ENCODE measurements at regions of chr2 and their contacts with region 1.

Region 1: DNA sequence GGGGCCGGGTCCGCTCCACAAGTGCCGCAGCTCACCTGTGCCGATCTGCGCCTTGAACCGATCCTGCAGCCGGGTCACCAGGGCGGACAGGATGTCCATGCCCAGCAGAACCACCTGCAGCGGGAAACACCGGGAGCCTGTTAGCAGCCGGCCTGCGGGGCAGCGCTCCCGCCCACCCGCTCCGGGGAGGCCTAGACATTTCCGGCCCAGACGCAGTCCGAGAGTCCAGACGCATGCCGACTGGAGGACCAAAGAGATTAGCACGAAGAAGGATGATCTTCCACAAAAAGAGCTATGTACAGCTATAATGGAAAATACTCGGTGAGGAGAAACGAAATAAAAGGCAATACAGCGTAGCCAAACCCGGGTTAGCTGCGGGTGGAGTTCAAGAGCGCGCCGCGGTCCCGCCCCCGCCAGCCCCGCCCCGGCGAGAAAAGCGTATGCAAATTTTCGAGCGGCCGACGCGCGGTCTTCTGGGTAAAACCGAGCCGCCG is 421 bp upstream of the RNU4ATAC start:
- DNase-seq: no peak
- H3K4me3 ChIP-seq: peak overlapping the region; percentile 78
- CTCF ChIP-seq: no peak

Region 2: DNA sequence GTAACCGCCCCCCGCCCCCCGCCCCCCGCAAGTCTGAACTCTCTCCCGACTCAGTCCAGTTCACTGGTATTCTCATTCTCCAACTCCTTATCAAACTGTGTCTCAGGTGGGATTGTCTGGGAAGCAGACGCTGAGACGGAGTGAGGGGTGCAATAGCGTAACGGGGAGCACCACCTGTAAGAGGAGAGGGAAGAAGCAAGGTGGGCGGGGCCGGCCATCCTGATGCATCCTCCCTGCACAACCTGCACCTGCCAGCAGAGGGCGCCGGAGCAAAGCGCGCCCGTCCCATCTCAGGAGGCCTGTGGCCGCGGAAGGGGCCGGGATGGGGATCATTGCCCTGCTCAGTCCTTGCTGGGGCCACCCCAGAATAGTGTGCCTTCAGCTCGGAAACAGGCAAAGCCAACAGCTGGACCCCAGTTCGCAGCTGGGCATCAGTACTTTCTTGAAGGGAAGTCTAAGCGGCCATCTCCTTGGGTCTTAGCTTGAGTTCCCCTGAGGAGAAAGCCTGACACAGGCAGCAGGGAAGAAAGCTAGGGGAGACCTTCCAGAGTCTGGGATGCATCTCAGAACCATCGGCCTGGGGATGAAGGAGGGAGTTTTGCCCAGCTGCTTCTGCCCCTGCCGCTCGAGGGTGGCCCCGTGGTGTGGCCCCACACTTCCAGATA is 453.2 kb before region 1 on chr2:
- CTCF ChIA-PET with region 1: no interaction called
- POLR2A ChIA-PET with region 1: interaction called, 12 read pairs
- DNase-seq: no peak
- H3K4me3 ChIP-seq: no peak overlapping the region
- CTCF ChIP-seq: peak; percentile 98

Region 3: GRCh38 chr2:121471532-121472469 is 58.5 kb before region 1 on chr2:
- CTCF ChIA-PET with region 1: interaction called, 3 read pairs
- POLR2A ChIA-PET with region 1: interaction called, 12 read pairs
- DNase-seq: peak; percentile 47
- H3K4me3 ChIP-seq: no peak overlapping the region
- CTCF ChIP-seq: no peak

Region 4: DNA sequence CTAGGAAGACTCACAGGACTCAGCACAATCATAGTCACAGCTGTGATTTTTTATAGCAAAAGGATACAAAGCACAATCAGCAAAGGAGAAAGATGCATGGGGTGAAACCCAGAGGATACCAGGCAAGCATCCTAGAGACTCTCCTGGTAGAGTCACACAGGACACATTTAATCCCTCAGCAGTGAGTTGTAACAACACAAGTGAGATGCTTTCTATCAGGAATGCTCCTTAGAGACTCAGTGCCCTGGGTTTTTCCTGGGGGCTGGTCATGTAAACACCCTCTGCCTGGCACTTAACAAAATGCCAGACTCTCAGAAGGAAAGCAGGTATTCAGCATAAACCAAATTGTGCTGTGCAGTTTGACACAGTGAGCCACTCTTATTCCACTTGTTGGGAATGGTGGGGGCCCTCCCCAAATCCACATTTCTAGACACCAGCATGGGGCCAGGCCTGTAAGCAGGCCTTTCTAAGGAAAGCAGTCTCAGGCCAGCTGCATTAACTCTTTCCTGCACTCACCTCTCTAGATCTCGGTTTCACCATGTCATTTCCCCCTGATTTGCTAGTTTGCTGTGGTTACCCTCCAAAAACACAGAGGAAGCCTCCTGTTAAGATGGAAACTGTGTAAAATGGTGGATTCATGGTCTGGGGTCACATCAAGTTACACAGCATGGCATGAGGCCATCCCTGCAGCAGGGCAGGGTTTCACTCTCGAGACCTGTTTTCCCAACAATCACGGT is 16.5 kb before region 1 on chr2:
- CTCF ChIA-PET with region 1: interaction called, 12 read pairs
- POLR2A ChIA-PET with region 1: interaction called, 3 read pairs
- DNase-seq: no peak
- H3K4me3 ChIP-seq: no peak overlapping the region
- CTCF ChIP-seq: no peak

Region 5: DNA sequence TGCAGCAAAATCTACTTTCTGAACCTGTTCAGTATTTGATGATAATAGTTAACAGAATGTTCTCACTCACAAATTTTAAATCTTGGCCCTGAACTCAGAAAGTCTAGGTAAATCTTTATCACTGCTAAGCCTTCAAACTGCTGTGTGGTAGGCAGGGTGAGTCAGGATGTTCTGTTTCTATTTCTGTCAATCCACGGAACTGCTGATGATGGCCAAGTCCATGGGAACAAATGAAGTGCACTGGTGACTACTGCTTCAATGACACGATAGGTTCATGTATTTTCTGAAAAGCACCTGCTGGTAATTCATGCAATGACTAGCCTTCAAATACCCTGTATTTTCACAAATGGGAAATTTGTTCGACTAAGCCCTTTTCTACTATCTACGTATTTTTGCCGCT is 192.2 kb after region 1 on chr2:
- CTCF ChIA-PET with region 1: interaction called, 25 read pairs
- POLR2A ChIA-PET with region 1: interaction called, 33 read pairs
- DNase-seq: peak; percentile 40
- H3K4me3 ChIP-seq: no peak overlapping the region; the same call in 1 of the 2 replicates
- CTCF ChIP-seq: no peak